Cardiac septum (tissue), 1 donor: ENCODE measurements at regions of chr5 and their contacts with region 1.

Region 1: GRCh38 chr5:38023799-38024198 is 184.0 kb upstream of the GDNF start:
- DNase-seq: no peak

Region 2: DNA sequence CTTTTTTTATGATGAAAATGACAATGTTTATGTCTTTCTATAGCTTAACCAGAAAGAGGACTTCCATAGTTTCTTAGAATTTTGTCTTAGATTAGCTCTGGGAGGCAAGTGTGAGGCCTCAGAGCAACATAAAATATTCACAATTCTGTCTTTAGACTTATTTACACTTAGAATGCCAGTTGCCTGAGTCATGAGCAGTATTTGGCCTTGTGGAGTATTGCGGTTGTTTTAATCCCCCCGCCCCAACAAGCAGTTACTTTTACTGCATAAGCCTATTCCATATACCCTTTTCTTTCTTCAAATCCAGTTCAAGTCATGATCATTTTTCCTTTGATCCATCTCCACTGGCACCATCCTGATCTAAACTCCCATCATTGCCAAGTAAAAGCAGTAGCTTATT is 36.6 kb after region 1 on chr5:
- intact Hi-C with region 1: loop called (anchors 2 kb)
- DNase-seq: no peak